Activated naive CD8-positive, alpha-beta T cell treated with anti-CD3 and anti-CD28 coated beads, Interleukin-2, amount 10 ng/mL, durations not matched to agents 7 days and 5 days (primary cell): ENCODE measurements at regions of chr6 and their contacts with region 1.

Region 1: DNA sequence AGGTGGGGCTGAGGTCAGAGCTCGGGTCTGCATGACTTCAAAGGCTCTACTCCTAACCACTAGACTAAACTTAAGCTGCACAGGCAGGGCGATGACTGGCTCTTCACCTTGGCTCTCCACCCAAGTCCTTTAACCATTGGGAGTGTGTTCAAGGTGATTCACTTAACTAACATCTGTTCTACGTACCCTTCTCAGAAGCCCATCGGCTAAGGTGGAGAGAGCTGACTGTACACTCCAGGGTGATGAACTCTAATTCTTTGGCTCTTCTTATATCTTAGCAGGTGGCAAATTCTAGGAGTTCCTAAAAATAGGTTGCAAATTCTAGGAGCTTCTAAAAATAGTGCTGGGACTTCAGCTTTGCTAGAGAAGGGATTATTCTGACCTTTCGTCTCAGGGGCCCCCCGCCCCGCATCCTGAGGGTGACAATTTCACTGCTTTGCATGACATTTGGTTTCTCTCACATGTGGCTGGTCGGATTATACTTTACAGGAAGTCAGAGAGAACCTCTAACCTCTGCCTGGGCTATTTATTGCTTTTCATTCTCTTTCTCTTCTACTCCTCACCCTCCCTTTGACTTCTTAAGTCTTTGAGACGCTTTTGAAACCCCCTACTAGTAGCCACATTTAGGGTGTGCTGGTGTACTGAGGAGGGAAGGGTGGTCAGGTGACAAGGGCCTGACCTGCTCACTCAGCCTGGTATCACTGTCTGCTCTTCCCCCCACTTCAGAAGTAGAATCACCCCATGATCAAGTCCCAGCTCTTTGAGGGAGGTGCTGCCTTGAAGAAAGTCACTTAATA is 55.5 kb downstream of the PRDM1 start:
- DNase-seq: peak; percentile 73
- ATAC-seq: peak; percentile 85
- H3K4me3 Mint-ChIP-seq: peak overlapping the region; percentile 70
- H3K27ac Mint-ChIP-seq: peak overlapping the region; percentile 97
- H3K4me1 Mint-ChIP-seq: peaks cover 56% of the 10 kb centered on the region
- H3K27me3 Mint-ChIP-seq: no peaks in the 10 kb centered on the region

Region 2: DNA sequence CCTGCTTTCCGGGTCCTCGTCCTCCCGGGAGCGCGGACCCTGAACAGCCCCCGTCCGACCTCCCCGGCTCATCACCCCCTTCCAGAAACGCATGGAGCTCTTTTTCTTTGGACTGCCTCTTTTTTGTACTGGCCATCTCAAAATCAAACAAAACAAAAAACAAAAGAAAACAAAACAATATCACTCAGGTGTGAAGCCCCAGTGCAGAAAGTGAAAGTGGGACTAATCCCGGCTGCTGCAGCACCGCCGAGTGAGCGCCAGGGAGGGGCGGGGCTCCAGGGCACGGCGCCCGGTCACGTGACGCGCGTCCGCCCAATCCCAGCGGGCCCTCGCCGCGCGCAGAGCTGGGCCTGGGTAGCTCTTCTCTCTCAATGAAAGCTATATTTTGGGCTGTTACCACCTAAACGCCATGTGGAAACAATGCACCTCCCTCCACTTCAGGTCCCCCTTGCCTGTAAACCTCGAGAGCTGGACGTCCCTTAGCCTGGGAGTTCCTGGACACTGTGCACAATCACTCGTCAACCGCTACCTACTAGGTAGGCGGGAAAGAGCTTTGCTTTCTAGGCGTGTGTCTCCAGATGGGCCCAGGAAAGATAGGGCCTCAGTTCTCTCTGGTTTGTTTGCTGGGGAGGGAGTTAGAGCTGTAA is 149.2 kb before region 1 on chr6:
- POLR2A ChIA-PET with region 1: interaction called, 21 read pairs
- DNase-seq: peak; percentile 95
- ATAC-seq: peak; percentile 93
- H3K4me3 Mint-ChIP-seq: peak overlapping the region; percentile 84
- H3K27ac Mint-ChIP-seq: peak overlapping the region; percentile 79
- H3K4me1 Mint-ChIP-seq: peaks cover 29% of the 10 kb centered on the region
- H3K27me3 Mint-ChIP-seq: peaks cover 76% of the 10 kb centered on the region

Region 3: GRCh38 chr6:106163446-106163965 is 21.9 kb after region 1 on chr6:
- POLR2A ChIA-PET with region 1: interaction called, 28 read pairs
- DNase-seq: no peak
- ATAC-seq: peak; percentile 76
- H3K4me3 Mint-ChIP-seq: peak overlapping the region; percentile 64
- H3K27ac Mint-ChIP-seq: peak overlapping the region; percentile 94
- H3K4me1 Mint-ChIP-seq: peaks cover 47% of the 10 kb centered on the region
- H3K27me3 Mint-ChIP-seq: no peaks in the 10 kb centered on the region

Region 4: DNA sequence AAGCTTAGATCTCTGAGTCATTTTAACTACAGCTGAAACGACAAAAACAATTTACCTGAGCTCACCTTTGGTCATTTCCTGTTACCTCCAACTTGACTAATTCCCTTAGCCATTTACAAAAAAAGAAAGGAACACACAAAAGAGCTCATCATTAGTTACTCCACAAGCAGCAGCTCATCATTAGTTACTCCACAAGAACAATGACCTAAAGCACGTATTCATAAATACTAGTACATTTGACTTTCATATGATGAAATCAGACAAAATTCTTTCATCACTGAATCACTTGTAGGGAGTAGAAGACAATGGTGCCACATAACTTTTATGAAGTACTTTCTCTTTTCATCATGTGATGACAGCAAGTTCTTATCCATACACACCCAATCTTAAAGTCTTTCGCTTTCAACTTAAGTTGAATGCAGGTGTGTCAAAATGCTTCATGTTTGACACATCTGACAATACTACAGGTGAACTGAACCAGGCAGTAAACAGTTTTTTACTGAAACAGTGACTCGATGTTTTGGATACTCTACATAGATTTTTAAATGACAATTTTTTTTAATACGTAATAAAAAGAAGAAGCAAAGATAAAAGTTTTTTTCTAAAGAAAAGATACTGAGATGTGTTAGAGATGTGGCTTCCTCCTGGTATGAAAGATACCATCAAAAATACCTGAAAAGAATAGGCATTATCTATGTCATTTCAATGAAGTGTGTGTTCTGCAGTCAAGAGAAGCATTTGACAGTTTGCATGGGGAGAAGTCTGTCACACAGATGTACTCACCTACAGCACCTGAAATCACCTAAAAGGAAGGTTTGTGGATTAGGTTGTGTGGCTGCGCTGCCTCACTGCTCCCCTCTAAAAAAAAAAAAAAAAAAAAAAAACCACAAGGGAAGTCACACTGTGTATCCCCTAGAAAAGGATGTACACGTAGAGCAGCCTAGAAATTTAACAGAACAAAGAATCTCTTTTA is 53.6 kb after region 1 on chr6:
- POLR2A ChIA-PET with region 1: interaction called, 11 read pairs
- DNase-seq: no peak
- ATAC-seq: peak; percentile 78
- H3K4me3 Mint-ChIP-seq: peak overlapping the region; percentile 56
- H3K27ac Mint-ChIP-seq: peak overlapping the region; percentile 83
- H3K4me1 Mint-ChIP-seq: peaks cover 45% of the 10 kb centered on the region
- H3K27me3 Mint-ChIP-seq: no peaks in the 10 kb centered on the region